ENCODE measurements at regions of chr9 and their contacts with region 1.

Region 1: DNA sequence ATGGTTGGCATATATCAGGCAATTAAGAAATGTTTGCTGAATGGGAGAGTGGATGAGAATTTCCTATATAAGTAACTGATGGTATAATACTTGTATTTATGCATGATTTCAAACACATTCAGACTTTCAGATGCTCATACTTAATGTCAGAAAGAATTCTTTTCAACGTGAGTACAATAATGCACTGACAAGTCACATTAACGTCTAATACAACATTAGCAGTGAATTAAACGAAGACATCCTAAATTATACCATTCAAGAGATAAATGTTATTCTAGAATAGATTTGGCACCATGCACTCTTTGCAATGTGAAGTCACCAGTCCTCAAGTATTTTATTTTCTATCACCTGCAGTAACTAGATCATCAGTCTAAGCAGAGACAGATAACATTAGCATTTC is 712.9 kb downstream of the TLE1 start:
- DNase-seq: no peak
- ATAC-seq: no peak

Region 2: GRCh38 chr9:80928697-80929096 is 47.7 kb before region 1 on chr9:
- intact Hi-C with region 1: loop called (anchors 5 kb)
- DNase-seq: no peak
- ATAC-seq: no peak

Region 3: DNA sequence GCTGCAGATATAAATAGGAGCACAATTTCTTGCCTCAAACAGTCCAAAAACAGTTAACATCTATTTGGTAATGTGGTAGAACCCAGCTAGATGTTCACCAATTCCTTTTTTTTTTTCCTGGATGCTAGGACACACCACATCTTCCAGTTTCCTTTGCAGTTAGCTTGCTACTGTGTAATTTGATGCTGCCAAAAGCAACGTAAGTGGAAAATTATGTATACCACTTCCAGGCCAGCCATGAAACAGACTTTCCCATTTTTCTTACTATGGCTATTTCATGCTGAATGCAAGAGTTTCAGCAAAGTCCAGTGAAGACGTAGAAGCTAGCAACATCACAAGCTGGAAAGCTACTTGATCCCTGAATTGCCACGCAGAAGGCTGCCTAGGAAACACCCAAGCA is 45.8 kb after region 1 on chr9:
- intact Hi-C with region 1: no loop called
- DNase-seq: no peak
- ATAC-seq: no peak

Region 4: GRCh38 chr9:81077572-81077971 is 101.2 kb after region 1 on chr9:
- intact Hi-C with region 1: no loop called
- DNase-seq: no peak
- ATAC-seq: no peak